ENCODE measurements at regions of chr6 and their contacts with region 1.

Region 1: GRCh38 chr6:28895134-28895812 is 28.5 kb downstream of the TRIM27 start:
- DNase-seq: peak; percentile 72 to 95 (median 91)
- ATAC-seq: peak; percentile 83
- H3K4me3 ChIP-seq: peak overlapping the region; percentile 82
- H3K4me3 Mint-ChIP-seq: peak overlapping the region; percentile 92 to 100 (median 98)
- H3K27ac ChIP-seq: peak overlapping the region; percentile 99
- H3K27ac Mint-ChIP-seq: peak overlapping the region; percentile 98 to 100 (median 100)
- H3K4me1 ChIP-seq: peaks cover 5 to 6% of the 10 kb centered on the region in 2 donors
- H3K4me1 Mint-ChIP-seq: peaks cover 0 to 32% (median 14%) of the 10 kb centered on the region in 7 donors
- H3K27me3 ChIP-seq: no peaks in the 10 kb centered on the region
- H3K27me3 Mint-ChIP-seq: peaks cover 0 to 15% (median 0%) of the 10 kb centered on the region in 5 donors

Region 2: DNA sequence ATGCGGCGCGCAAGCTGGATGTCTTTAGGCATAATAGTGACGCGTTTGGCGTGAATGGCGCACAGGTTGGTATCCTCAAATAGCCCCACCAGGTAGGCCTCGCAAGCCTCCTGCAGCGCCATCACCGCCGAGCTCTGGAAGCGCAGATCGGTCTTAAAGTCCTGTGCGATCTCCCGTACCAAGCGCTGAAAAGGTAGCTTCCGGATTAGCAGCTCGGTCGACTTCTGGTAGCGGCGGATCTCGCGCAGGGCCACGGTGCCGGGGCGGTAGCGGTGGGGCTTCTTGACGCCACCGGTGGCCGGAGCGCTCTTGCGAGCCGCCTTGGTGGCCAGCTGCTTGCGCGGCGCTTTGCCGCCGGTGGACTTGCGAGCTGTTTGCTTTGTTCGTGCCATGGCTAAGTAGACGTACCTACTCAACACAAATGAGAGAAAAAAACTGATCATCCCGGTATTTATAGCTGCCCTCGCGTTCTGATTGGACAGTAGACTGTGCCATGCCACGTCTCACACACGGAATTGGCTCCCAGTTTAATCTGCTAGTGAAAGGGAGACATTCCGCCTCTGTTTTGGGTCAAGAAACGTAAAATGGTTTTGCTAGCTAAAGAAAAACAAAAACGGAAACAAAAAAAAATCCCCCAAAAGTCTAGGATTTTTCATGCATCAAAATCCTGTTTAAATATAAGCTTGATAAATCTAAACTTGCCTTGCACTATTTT is 1023.2 kb before region 1 on chr6:
- CTCF ChIA-PET with region 1: no interaction called
- POLR2A ChIA-PET with region 1: interaction called, 10 read pairs
- intact Hi-C with region 1: loop called in 1 of 2 experiments (anchors 5 kb)
- DNase-seq: peak; percentile 68 to 97 (median 94)
- ATAC-seq: peak; percentile 88
- H3K4me3 ChIP-seq: peak overlapping the region; percentile 69
- H3K4me3 Mint-ChIP-seq: peak overlapping the region; percentile 83 to 99 (median 94)
- H3K27ac ChIP-seq: peak overlapping the region; percentile 84
- H3K27ac Mint-ChIP-seq: peak overlapping the region; percentile 95 to 98 (median 97)
- H3K4me1 ChIP-seq: peaks cover under 1 to 19% of the 10 kb centered on the region in 2 donors
- H3K4me1 Mint-ChIP-seq: peaks cover 15 to 69% (median 42%) of the 10 kb centered on the region in 7 donors
- H3K27me3 ChIP-seq: no peaks in the 10 kb centered on the region
- H3K27me3 Mint-ChIP-seq: peaks cover 0 to 8% (median 0%) of the 10 kb centered on the region in 5 donors

Region 3: GRCh38 chr6:28863604-28864320 is 31.5 kb before region 1 on chr6:
- CTCF ChIA-PET with region 1: interaction called, 9 read pairs
- POLR2A ChIA-PET with region 1: interaction called, 459 read pairs
- intact Hi-C with region 1: loop called (anchors 1 kb)
- DNase-seq: peak; percentile 60 to 93 (median 89)
- ATAC-seq: peak; percentile 64
- H3K4me3 ChIP-seq: peak overlapping the region; percentile 95
- H3K4me3 Mint-ChIP-seq: peak overlapping the region; percentile 90 to 98 (median 92)
- H3K27ac ChIP-seq: peak overlapping the region; percentile 75
- H3K27ac Mint-ChIP-seq: peak overlapping the region; percentile 89 to 100 (median 95)
- H3K4me1 ChIP-seq: peaks cover 11 to 18% of the 10 kb centered on the region in 2 donors
- H3K4me1 Mint-ChIP-seq: peaks cover 15 to 69% (median 53%) of the 10 kb centered on the region in 7 donors
- H3K27me3 ChIP-seq: no peaks in the 10 kb centered on the region
- H3K27me3 Mint-ChIP-seq: peaks cover 0 to 30% (median 4%) of the 10 kb centered on the region in 5 donors

Region 4: GRCh38 chr6:28880894-28881780 is 14.1 kb before region 1 on chr6:
- CTCF ChIA-PET with region 1: interaction called, 4 read pairs
- POLR2A ChIA-PET with region 1: interaction called, 242 read pairs
- intact Hi-C with region 1: loop called (anchors 1 kb)
- DNase-seq: peak in 8 of 9 donors; percentile 39 to 73 (median 57)
- ATAC-seq: no peak
- H3K4me3 ChIP-seq: peak overlapping the region; percentile 57
- H3K4me3 Mint-ChIP-seq: peak overlapping the region; percentile 12 to 92 (median 89)
- H3K27ac ChIP-seq: peak overlapping the region; percentile 12
- H3K27ac Mint-ChIP-seq: peak overlapping the region; percentile 14 to 98 (median 91)
- H3K4me1 ChIP-seq: peaks cover 8 to 26% of the 10 kb centered on the region in 2 donors
- H3K4me1 Mint-ChIP-seq: peaks cover 19 to 55% (median 45%) of the 10 kb centered on the region in 7 donors
- H3K27me3 ChIP-seq: no peaks in the 10 kb centered on the region
- H3K27me3 Mint-ChIP-seq: peaks cover 0 to 39% (median 3%) of the 10 kb centered on the region in 5 donors

Region 5: DNA sequence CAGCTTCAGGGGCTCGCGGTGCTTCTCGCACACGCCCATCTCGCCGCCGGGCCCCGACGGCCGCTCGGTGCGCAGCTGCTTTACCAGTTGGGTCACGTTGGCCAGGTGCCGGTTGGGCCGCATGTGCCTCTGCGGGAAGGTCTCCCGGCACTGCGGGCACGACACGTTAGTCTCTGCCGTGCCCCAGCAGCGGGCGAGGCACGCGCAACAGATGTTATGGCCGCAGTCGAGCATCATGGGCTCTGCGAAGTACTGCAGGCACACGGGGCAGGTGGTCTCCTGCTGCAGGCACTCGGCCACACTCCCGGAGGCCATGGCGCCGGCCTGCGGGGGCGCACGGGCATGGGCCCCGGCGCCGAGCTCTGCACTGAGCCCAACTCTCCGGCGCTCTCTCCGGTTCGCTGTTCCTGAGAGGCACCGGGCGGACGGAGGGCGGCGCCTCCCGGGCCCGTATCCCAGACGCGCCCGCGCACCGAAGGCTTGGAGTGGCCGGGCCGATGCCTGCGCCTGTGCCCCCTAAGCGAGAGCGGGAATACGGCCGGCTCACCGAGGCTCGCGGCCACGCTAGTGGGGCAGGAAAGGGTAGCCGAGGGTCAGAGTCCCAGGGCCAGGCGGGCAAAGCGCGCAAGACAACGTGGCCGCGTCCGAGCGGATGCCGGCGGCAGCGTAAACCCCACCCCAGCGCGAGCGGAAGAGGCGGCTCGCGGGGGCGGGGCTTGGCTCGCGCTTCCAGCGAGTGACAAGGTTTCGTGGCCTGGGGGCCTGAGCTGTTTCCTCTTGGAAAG is 28.2 kb after region 1 on chr6 and contains the start of gene TRIM27:
- CTCF ChIA-PET with region 1: interaction called, 3 read pairs
- POLR2A ChIA-PET with region 1: interaction called, 74 read pairs
- intact Hi-C with region 1: loop called (anchors 1 kb)
- DNase-seq: peak; percentile 67 to 87 (median 80)
- ATAC-seq: peak; percentile 89
- H3K4me3 ChIP-seq: peak within 1 kb of the TSS; percentile 87
- H3K4me3 Mint-ChIP-seq: peak within 1 kb of the TSS; percentile 87 to 99 (median 95)
- H3K27ac ChIP-seq: peak within 1 kb of the TSS; percentile 86
- H3K27ac Mint-ChIP-seq: peak within 1 kb of the TSS; percentile 86 to 96 (median 92)
- H3K4me1 ChIP-seq: peaks cover 20 to 34% of the 10 kb centered on the region in 2 donors
- H3K4me1 Mint-ChIP-seq: peaks cover 28 to 52% (median 41%) of the 10 kb centered on the region in 7 donors
- H3K27me3 ChIP-seq: no peaks in the 10 kb centered on the region
- H3K27me3 Mint-ChIP-seq: no peaks in the 10 kb centered on the region
- total RNA-seq, gene TRIM27: 22.9 to 93.9 (median 67.5) TPM

Region 6: GRCh38 chr6:28988536-28989311 is 93.5 kb after region 1 on chr6:
- CTCF ChIA-PET with region 1: no interaction called
- POLR2A ChIA-PET with region 1: no interaction called
- intact Hi-C with region 1: loop called in 1 of 2 experiments (anchors 2 kb)
- DNase-seq: peak; percentile 57 to 77 (median 71)
- ATAC-seq: peak; percentile 93
- H3K4me3 ChIP-seq: peak overlapping the region; percentile 53
- H3K4me3 Mint-ChIP-seq: peak overlapping the region; percentile 79 to 88 (median 84)
- H3K27ac ChIP-seq: no peak overlapping the region
- H3K27ac Mint-ChIP-seq: peak overlapping the region in 7 of 9 donors; percentile 28 to 82 (median 32)
- H3K4me1 ChIP-seq: peaks cover 0 to 5% of the 10 kb centered on the region in 2 donors
- H3K4me1 Mint-ChIP-seq: peaks cover 7 to 38% (median 32%) of the 10 kb centered on the region in 7 donors
- H3K27me3 ChIP-seq: no peaks in the 10 kb centered on the region
- H3K27me3 Mint-ChIP-seq: peaks cover 0 to 53% (median 15%) of the 10 kb centered on the region in 5 donors

Region 7: DNA sequence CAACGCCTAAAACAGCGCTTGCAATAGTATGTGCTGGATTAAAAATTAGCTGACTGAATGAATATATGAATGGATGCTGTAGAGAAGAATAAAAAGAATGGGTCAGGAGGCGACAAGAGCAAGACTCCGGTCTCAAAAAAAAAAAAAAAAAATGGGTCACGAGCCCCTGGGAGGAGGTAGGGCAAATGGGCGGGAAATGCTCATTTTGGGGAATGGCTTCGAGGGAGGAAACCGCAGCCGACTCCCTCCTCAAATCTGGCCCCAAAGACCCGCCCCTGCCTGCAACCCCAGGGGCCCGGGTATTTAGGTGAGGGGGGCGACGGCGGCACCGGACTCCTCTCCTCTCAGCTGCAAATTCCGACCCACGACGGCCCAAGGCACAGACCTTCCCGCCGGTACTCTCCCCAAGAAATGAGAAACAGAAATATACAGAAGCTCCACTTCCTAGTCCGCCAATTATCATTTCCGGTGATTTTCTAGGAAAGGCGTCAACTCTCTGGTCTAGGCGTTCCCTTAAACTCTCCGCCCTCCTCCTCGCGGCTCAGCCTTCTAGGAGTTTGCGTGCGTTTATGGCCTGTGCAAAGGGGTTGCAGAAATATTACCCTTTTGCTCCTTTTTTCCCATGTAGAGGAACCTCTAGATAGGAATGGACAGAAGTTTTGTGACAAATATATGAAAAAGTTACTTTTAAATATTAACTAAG is 110.1 kb after region 1 on chr6 and contains the start of gene ZNF311:
- CTCF ChIA-PET with region 1: no interaction called
- POLR2A ChIA-PET with region 1: no interaction called
- intact Hi-C with region 1: loop called in 1 of 2 experiments (anchors 1 kb)
- DNase-seq: peak in 6 of 9 donors; percentile 18 to 56 (median 38)
- ATAC-seq: peak; percentile 85
- H3K4me3 ChIP-seq: peak within 1 kb of the TSS; percentile 51
- H3K4me3 Mint-ChIP-seq: peak within 1 kb of the TSS; percentile 87 to 100 (median 95)
- H3K27ac ChIP-seq: peak within 1 kb of the TSS; percentile 66
- H3K27ac Mint-ChIP-seq: peak within 1 kb of the TSS; percentile 60 to 94 (median 86)
- H3K4me1 ChIP-seq: peaks cover 4 to 7% of the 10 kb centered on the region in 2 donors
- H3K4me1 Mint-ChIP-seq: peaks cover 16 to 27% (median 21%) of the 10 kb centered on the region in 7 donors
- H3K27me3 ChIP-seq: peaks cover 0 to 7% of the 10 kb centered on the region in 2 donors
- H3K27me3 Mint-ChIP-seq: peaks cover 0 to 17% (median 3%) of the 10 kb centered on the region in 5 donors
- total RNA-seq, gene ZNF311: 0.22 to 0.73 (median 0.57) TPM

Region 8: DNA sequence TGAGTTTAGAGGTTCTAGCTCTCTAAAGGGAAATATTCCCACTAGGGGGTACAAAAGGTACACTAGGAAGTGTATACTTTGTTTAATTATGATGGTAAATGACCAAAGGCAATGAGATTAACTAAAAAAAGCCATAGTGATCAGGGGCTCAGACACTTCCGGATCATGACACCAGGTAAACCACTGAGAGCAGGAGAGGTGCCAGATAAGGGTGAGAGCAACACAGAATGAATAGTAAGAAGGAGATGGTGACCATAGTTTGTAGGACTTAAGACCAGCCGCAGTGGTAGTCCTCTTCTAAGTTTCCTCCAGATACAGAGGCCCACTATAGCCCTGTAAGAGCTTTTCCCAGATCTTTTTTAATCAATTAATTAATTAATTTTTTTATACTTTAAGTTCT is 316.2 kb after region 1 on chr6:
- CTCF ChIA-PET with region 1: no interaction called
- POLR2A ChIA-PET with region 1: no interaction called
- intact Hi-C with region 1: no loop called
- DNase-seq: no peak
- ATAC-seq: no peak
- H3K4me3 ChIP-seq: no peak overlapping the region
- H3K4me3 Mint-ChIP-seq: no peak overlapping the region
- H3K27ac ChIP-seq: no peak overlapping the region
- H3K27ac Mint-ChIP-seq: no peak overlapping the region
- H3K4me1 ChIP-seq: no peaks in the 10 kb centered on the region
- H3K4me1 Mint-ChIP-seq: no peaks in the 10 kb centered on the region
- H3K27me3 ChIP-seq: no peaks in the 10 kb centered on the region
- H3K27me3 Mint-ChIP-seq: peaks cover 8 to 41% (median 40%) of the 10 kb centered on the region in 5 donors

Measured in naive thymus-derived CD4-positive, alpha-beta T cell (primary cell).